Activated naive CD4-positive, alpha-beta T cell treated with anti-CD3 and anti-CD28 coated beads for 36 hours (primary cell): ENCODE measurements at regions of chr4 and their contacts with region 1.

Region 1: DNA sequence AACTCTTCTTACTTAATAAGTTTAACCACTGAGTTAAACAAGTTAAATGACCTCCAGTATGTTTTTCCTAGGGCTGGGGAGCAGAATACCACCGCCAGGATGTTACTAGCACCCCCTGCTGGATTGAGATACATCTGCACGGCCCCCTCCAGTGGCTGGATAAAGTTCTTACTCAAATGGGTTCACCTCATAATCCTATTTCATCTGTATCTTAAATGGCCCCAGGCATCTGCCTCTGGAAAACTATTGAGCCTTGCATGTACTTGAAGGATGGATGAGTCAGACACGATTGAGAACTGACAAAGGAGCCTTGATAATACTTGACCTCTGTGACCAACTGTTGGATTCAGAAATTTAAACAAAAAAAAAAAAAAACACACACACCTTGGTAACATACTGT is 61.5 kb upstream of the MMAA start:
- DNase-seq: peak; percentile 73
- H3K4me3 Mint-ChIP-seq: no peak overlapping the region
- H3K27ac Mint-ChIP-seq: no peak overlapping the region
- H3K4me1 Mint-ChIP-seq: peaks cover under 1% of the 10 kb centered on the region
- H3K27me3 Mint-ChIP-seq: peaks cover 5% of the 10 kb centered on the region

Region 2: DNA sequence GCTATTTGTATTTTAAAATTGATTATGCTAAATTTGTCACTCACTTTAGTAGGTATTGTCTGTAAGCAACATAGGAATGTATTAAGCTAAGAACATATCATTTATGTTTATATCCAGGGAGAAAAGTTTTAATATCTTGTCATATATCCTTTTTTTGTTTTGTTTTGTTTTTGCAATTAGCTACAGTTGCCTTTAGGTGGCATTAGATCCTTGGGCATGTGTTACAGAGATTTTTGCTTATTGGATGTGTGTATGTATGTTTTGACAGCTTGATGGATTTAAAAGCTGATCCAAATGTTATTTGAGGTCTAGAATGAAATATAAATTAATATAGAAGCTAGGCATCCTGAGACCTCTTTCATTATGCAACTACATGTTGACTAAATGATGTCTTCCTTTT is 341.2 kb before region 1 on chr4:
- CTCF ChIA-PET with region 1: interaction called, 9 read pairs
- intact Hi-C with region 1: loop called (anchors 1 kb)
- DNase-seq: no peak
- H3K4me3 Mint-ChIP-seq: no peak overlapping the region
- H3K27ac Mint-ChIP-seq: no peak overlapping the region
- H3K4me1 Mint-ChIP-seq: no peaks in the 10 kb centered on the region
- H3K27me3 Mint-ChIP-seq: peaks cover 4% of the 10 kb centered on the region

Region 3: GRCh38 chr4:145234091-145234706 is 323.5 kb before region 1 on chr4:
- CTCF ChIA-PET with region 1: interaction called, 19 read pairs
- intact Hi-C with region 1: loop called (anchors 1 kb)
- DNase-seq: peak; percentile 80
- H3K4me3 Mint-ChIP-seq: no peak overlapping the region
- H3K27ac Mint-ChIP-seq: no peak overlapping the region
- H3K4me1 Mint-ChIP-seq: no peaks in the 10 kb centered on the region
- H3K27me3 Mint-ChIP-seq: no peaks in the 10 kb centered on the region

Region 4: GRCh38 chr4:145299380-145300076 is 258.2 kb before region 1 on chr4:
- CTCF ChIA-PET with region 1: no interaction called
- intact Hi-C with region 1: loop called (anchors 10 kb)
- DNase-seq: peak; percentile 88
- H3K4me3 Mint-ChIP-seq: no peak overlapping the region
- H3K27ac Mint-ChIP-seq: no peak overlapping the region
- H3K4me1 Mint-ChIP-seq: peaks cover 23% of the 10 kb centered on the region
- H3K27me3 Mint-ChIP-seq: peaks cover 9% of the 10 kb centered on the region

Region 5: GRCh38 chr4:145481164-145481941 is 76.4 kb before region 1 on chr4 and contains the start of gene SMAD1:
- CTCF ChIA-PET with region 1: interaction called, 5 read pairs
- intact Hi-C with region 1: loop called (anchors 2 kb)
- DNase-seq: peak; percentile 29
- H3K4me3 Mint-ChIP-seq: peak within 1 kb of the TSS; percentile 73
- H3K27ac Mint-ChIP-seq: no peak within 1 kb of the TSS
- H3K4me1 Mint-ChIP-seq: peaks cover 5% of the 10 kb centered on the region
- H3K27me3 Mint-ChIP-seq: peaks cover 31% of the 10 kb centered on the region
- total RNA-seq, gene SMAD1: 0.57 to 0.79 TPM

Region 6: DNA sequence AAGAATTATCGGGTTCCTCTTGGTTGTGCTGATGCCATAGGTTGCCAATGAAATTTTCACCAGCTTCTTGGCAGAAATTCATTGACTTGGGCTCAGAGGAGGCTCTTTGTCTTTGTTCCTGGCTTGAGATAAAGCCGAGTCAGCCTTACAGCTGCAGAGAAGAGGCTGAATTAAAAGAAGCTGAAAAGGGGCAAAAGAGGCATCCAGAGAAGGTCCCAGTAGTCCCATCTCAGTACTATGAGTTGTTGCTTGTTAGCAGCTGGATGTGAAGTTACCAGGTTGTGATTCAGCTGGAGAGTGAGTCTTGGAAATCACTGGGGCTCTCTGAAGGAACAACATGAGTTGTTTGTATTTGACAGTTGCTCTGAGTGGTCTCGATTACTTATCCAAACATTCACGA is 16.4 kb before region 1 on chr4:
- CTCF ChIA-PET with region 1: interaction called, 10 read pairs
- intact Hi-C with region 1: no loop called
- DNase-seq: no peak
- H3K4me3 Mint-ChIP-seq: no peak overlapping the region
- H3K27ac Mint-ChIP-seq: no peak overlapping the region
- H3K4me1 Mint-ChIP-seq: peaks cover 4% of the 10 kb centered on the region
- H3K27me3 Mint-ChIP-seq: peaks cover 8% of the 10 kb centered on the region

Region 7: GRCh38 chr4:146040623-146041022 is 482.9 kb after region 1 on chr4:
- CTCF ChIA-PET with region 1: no interaction called
- intact Hi-C with region 1: no loop called
- DNase-seq: no peak
- H3K4me3 Mint-ChIP-seq: no peak overlapping the region
- H3K27ac Mint-ChIP-seq: no peak overlapping the region
- H3K4me1 Mint-ChIP-seq: no peaks in the 10 kb centered on the region
- H3K27me3 Mint-ChIP-seq: peaks cover 4% of the 10 kb centered on the region